ENCODE measurements at regions of chr20 and their contacts with region 1.

Region 1: DNA sequence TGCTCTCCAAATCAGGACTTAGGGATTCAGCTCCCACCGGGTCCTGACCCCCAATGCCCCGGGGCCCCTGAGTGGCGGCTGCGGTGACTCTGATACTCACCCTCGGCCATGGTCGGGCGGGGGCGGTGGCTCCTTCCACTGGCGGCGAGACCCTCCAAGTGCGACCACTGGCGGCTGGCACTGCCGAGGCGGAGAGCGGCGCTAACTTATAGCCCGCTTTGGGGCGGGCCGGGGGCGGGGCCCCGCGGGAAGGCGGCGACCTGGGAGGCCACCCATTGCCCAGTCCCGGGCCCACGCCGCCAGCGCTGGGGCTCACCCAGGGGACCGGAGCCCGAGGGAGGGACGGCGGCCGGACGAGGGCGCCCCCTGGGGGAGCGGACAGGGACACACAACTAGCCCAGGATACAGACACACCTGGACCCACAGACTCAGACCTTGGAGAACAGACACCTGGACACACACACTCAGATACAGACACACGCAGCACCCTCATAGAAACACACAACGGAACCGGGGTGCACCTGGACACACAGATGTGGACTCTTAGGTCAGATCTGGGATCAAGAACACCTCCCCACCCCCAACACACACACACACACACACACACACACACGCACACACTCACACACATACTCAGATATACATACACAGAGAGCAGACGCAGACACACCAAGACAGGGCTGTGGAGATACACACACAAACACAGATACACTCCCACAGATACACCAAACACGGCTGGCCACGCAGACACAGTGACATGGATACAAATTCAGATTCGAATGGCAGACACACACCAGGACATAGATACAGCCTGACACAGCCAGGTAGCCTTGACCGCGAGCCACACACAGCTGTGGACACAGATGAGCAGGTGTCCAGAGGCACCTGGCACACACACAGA is at the start of gene TGM2:
- DNase-seq: no peak
- H3K4me3 ChIP-seq: peak within 1 kb of the TSS; percentile 70
- H3K27ac ChIP-seq: peak within 1 kb of the TSS; percentile 47
- H3K27me3 ChIP-seq: no peaks in the 10 kb centered on the region
- CTCF ChIP-seq: peak; percentile 77
- polyA plus RNA-seq, gene TGM2: 326 and 398 TPM in 2 replicates

Region 2: DNA sequence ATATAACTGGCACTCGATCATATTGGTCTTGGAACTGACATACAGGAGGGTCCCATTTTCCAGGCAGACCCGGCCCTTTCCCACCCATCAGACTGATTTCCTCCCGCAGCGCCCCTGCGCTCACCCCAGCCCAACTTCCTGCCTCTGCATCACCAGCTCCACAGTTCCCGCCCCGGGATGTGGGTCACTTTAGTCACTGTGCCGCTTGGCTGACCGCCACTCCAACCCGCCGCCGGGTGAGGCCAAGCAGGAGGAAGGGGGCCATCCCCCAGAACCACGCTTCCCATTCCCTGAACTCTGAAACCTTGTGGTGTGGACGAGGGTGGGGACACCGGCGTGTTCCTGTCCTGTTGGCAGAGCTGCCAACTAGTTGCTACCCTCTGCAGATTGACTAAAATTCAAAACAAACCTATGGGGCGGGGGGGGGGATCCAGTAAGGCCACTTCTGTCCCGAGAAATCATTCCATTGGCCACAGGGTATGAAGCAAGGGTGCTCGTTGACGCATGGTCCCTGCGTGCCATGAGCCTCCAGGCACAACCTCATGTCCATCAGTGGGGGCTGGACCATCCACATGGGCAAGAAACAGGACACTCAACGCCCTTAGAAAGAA is 12.6 kb before region 1 on chr20:
- CTCF ChIA-PET with region 1: interaction called, 10 read pairs
- POLR2A ChIA-PET with region 1: interaction called, 3 read pairs
- DNase-seq: no peak
- H3K4me3 ChIP-seq: no peak overlapping the region
- H3K27ac ChIP-seq: peak overlapping the region; percentile 61
- H3K27me3 ChIP-seq: no peaks in the 10 kb centered on the region
- CTCF ChIP-seq: no peak